Sigmoid colon (tissue), 7 donors: ENCODE measurements at regions of chr7 and their contacts with region 1.

Region 1: GRCh38 chr7:100101016-100101862 is at the starts of genes AP4M1 and MCM7:
- DNase-seq: peak; percentile 100
- H3K4me3 ChIP-seq: peak within 1 kb of the TSS; percentile 66 to 89 (median 82)
- H3K27ac ChIP-seq: peak within 1 kb of the TSS; percentile 95 to 99 (median 97)
- H3K4me1 ChIP-seq: peaks cover 0 to 41% (median 25%) of the 10 kb centered on the region in 4 donors
- H3K27me3 ChIP-seq: no peaks in the 10 kb centered on the region
- CTCF ChIP-seq: no peak
- EP300 ChIP-seq: no peak
- POLR2A ChIP-seq: no peak
- total RNA-seq, gene AP4M1: 18.1 to 26.6 (median 20.8) TPM
- total RNA-seq, gene MCM7: 30.7 to 43.6 (median 37.4) TPM

Region 2: GRCh38 chr7:99171731-99172130 is 929.5 kb before region 1 on chr7:
- intact Hi-C with region 1: no loop called
- DNase-seq: no peak
- H3K4me3 ChIP-seq: no peak overlapping the region
- H3K27ac ChIP-seq: no peak overlapping the region
- H3K4me1 ChIP-seq: no peaks in the 10 kb centered on the region
- H3K27me3 ChIP-seq: no peaks in the 10 kb centered on the region
- CTCF ChIP-seq: no peak
- EP300 ChIP-seq: no peak
- POLR2A ChIP-seq: no peak

Region 3: DNA sequence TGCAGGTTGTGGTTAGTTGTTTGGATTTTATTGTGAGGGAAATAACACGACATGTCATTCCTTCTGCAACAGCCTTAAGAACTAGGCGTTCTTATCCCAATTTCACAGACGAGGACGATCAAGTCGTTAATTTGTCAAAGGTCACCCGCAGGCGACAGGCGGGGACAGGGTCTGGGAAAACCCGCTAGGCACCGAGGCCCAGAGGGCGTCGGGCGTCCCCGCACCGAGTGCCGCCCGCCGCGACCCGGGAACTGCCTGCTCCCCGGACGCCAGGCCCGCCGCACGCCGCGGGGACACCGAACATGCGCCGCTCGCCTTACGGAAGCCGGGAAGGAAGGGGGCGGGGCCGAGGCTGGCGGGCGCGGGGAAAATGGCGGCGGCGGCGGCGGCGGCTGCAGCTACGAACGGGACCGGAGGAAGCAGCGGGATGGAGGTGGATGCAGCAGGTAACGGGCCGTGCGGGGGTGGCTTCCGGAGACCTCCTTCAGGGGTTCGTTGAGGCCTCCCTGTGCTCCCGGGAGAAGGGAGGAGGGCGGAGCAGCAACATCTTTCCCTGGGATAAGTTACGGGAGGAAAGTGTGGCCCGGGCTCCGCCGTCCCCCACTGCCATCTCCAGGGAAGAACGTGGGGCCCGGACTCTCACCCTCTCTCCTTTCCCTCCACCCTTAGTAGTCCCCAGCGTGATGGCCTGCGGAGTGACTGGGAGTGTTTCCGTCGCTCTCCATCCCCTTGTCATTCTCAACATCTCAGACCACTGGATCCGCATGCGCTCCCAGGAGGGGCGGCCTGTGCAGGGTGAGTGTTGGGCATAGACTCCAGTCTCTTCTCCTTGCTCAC is 12.4 kb before region 1 on chr7 and contains the start of gene COPS6:
- intact Hi-C with region 1: loop called (anchors 1 kb)
- DNase-seq: peak; percentile 91
- H3K4me3 ChIP-seq: peak within 1 kb of the TSS; percentile 54 to 91 (median 71)
- H3K27ac ChIP-seq: peak within 1 kb of the TSS; percentile 86 to 94 (median 88)
- H3K4me1 ChIP-seq: peaks cover 0 to 57% (median 51%) of the 10 kb centered on the region in 4 donors
- H3K27me3 ChIP-seq: no peaks in the 10 kb centered on the region
- CTCF ChIP-seq: no peak
- EP300 ChIP-seq: no peak
- POLR2A ChIP-seq: peak; percentile 48 to 62
- total RNA-seq, gene COPS6: 58.4 to 87.4 (median 68.4) TPM

Region 4: GRCh38 chr7:100119062-100119700 is 17.9 kb after region 1 on chr7 and contains the starts of genes CNPY4 and TAF6:
- intact Hi-C with region 1: loop called (anchors 2 kb)
- DNase-seq: peak; percentile 98
- H3K4me3 ChIP-seq: peak within 1 kb of the TSS; percentile 61 to 81 (median 73)
- H3K27ac ChIP-seq: peak within 1 kb of the TSS; percentile 84 to 91 (median 88)
- H3K4me1 ChIP-seq: peaks cover 0 to 20% (median 18%) of the 10 kb centered on the region in 4 donors
- H3K27me3 ChIP-seq: no peaks in the 10 kb centered on the region
- CTCF ChIP-seq: peak in 1 of 4 experiments; percentile 13
- EP300 ChIP-seq: no peak
- POLR2A ChIP-seq: peak; percentile 49 to 68
- total RNA-seq, gene CNPY4: 13.9 to 26.6 (median 15.5) TPM
- total RNA-seq, gene TAF6: 56.6 to 87.8 (median 65.2) TPM